ENCODE measurements at regions of chr1 and their contacts with region 1.

Region 1: GRCh38 chr1:90729504-90730242 is 12.6 kb upstream of the BARHL2 start:
- DNase-seq: no peak
- ATAC-seq: no peak
- H3K4me3 ChIP-seq: peak overlapping the region; percentile 22
- H3K4me3 Mint-ChIP-seq: peak overlapping the region; percentile 64
- H3K27ac ChIP-seq: no peak overlapping the region
- H3K27ac Mint-ChIP-seq: no peak overlapping the region
- H3K4me1 ChIP-seq: peaks cover 53% of the 10 kb centered on the region
- H3K4me1 Mint-ChIP-seq: peaks cover 52% of the 10 kb centered on the region
- H3K27me3 ChIP-seq: peaks cover 70 to 100% of the 10 kb centered on the region in 2 experiments
- H3K27me3 Mint-ChIP-seq: peaks cover 99% of the 10 kb centered on the region
- CTCF ChIP-seq: peak; percentile 34

Region 2: DNA sequence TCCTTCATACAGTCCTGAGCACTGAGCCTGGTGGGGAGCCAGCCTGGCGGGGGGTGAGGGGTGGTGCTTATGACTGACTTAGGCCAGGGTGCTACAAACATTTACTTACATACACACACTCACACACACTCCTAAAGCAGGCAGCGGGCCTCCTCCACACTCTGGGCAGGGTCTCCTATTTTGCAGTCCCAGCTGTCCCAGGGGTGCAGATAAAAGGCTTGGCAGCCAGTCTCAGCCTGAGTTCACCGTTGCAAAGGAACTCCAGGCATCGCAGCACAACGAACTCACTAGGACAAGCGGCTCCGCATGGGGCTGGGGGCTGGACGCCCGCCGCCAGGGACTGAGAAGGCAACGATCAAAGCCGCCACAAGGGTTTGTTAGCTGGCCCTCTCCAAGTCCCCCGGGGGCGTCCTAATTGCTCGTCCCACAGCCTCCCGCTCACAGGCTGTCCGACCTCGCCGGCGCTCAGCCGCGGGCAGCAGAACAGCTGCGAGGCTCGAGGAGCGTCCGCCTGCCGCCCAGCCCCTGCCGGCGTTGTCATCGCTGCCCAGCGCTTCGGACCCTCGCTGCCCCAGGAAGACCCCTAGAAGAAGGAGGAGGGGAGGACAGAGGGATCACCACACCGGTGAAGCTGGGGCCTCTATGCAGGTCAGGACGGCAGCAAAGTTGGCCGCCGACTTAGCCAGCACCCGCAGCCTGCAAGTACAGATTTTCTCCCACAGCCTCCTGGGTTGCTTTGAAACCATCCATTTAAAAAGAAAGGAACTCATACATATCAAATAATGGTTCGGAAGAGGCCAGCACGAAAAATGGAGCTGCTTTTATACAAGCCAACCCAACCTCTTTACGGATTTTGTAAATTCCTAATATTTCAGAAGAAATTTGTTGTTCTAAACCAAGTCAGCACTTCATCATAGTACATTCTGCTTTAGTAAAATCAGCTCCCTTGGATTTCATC is 18.8 kb before region 1 on chr1:
- CTCF ChIA-PET with region 1: no interaction called
- POLR2A ChIA-PET with region 1: interaction called, 3 read pairs
- intact Hi-C with region 1: loop called in 1 of 2 experiments (anchors 2 kb)
- DNase-seq: no peak
- ATAC-seq: no peak
- H3K4me3 ChIP-seq: no peak overlapping the region
- H3K4me3 Mint-ChIP-seq: no peak overlapping the region
- H3K27ac ChIP-seq: no peak overlapping the region
- H3K27ac Mint-ChIP-seq: no peak overlapping the region
- H3K4me1 ChIP-seq: peaks cover 28% of the 10 kb centered on the region
- H3K4me1 Mint-ChIP-seq: peaks cover 22% of the 10 kb centered on the region
- H3K27me3 ChIP-seq: peaks cover 88 to 99% of the 10 kb centered on the region in 2 experiments
- H3K27me3 Mint-ChIP-seq: peaks cover 99% of the 10 kb centered on the region
- CTCF ChIP-seq: no peak

Region 3: GRCh38 chr1:90834886-90835660 is 105.4 kb after region 1 on chr1:
- CTCF ChIA-PET with region 1: no interaction called
- POLR2A ChIA-PET with region 1: no interaction called
- intact Hi-C with region 1: loop called (anchors 5 to 10 kb)
- DNase-seq: peak in 1 of 14 experiments; percentile 22
- ATAC-seq: peak; percentile 43
- H3K4me3 ChIP-seq: no peak overlapping the region
- H3K4me3 Mint-ChIP-seq: peak overlapping the region; percentile 1
- H3K27ac ChIP-seq: no peak overlapping the region
- H3K27ac Mint-ChIP-seq: no peak overlapping the region
- H3K4me1 ChIP-seq: peaks cover 27% of the 10 kb centered on the region
- H3K4me1 Mint-ChIP-seq: peaks cover 31% of the 10 kb centered on the region
- H3K27me3 ChIP-seq: peaks cover 85 to 94% of the 10 kb centered on the region in 2 experiments
- H3K27me3 Mint-ChIP-seq: peaks cover 92% of the 10 kb centered on the region
- CTCF ChIP-seq: no peak

Region 4: GRCh38 chr1:91189096-91189495 is 459.4 kb after region 1 on chr1:
- CTCF ChIA-PET with region 1: no interaction called
- POLR2A ChIA-PET with region 1: no interaction called
- intact Hi-C with region 1: no loop called
- DNase-seq: no peak
- ATAC-seq: no peak
- H3K4me3 ChIP-seq: no peak overlapping the region
- H3K4me3 Mint-ChIP-seq: no peak overlapping the region
- H3K27ac ChIP-seq: no peak overlapping the region
- H3K27ac Mint-ChIP-seq: no peak overlapping the region
- H3K4me1 ChIP-seq: no peaks in the 10 kb centered on the region
- H3K4me1 Mint-ChIP-seq: no peaks in the 10 kb centered on the region
- H3K27me3 ChIP-seq: peaks cover 0 to 2% of the 10 kb centered on the region in 2 experiments
- H3K27me3 Mint-ChIP-seq: peaks cover 35% of the 10 kb centered on the region
- CTCF ChIP-seq: no peak

Measured in CD4-positive, alpha-beta T cell (primary cell).